Activated B cell treated with CpG ODN at 0.5 μM for 24 hours (primary cell): ENCODE measurements at regions of chr2 and their contacts with region 1.

Region 1: DNA sequence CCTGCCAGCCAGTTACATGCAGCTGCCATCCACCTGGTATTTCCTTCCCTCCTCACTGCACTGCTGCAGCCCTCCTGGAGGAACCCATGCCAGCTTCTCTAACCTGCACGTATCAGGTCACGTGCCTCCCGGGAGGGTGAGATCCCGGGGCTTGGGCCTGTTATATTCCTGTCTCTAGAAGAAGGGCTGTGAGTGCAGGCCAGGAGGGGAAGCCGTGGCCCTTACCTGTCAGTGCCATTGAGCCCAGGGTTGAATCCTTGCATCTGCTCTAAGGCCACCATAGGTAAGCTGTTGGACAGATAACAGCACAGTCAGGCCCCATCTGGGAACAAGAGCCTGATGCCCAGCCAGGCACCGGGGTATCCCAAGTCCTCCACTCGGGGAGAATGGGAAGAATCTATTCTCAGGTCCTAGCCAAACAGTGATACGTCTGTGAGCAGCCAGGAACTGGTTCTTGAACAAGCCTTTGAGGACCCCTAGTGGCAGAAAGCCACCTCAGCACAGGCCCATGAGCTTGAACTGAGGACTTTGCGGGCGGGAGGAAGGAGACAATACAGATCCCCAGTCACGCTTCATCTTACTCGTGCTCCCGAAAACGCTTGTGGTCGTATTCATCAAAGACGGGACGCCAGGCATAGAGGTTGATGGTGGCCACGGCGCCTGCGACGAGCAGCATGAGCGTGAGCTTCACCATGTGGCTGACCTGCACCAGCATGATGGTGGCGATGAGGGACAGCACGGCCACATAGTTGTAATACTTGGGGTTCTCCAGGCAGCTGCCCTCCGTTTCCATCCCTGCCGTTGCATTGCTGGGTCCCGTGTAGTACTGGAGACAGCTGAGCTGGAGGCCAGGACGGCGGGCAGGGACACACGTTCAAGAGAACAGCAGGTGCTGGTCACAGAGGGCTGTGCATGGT is 34.4 kb downstream of the CENPO start:
- DNase-seq: peak; percentile 41
- ATAC-seq: peak; percentile 86
- H3K4me3 Mint-ChIP-seq: no peak overlapping the region
- H3K27ac Mint-ChIP-seq: no peak overlapping the region
- H3K4me1 Mint-ChIP-seq: peaks cover 3% of the 10 kb centered on the region
- H3K27me3 Mint-ChIP-seq: no peaks in the 10 kb centered on the region
- CTCF ChIP-seq: peak; percentile 38

Region 2: GRCh38 chr2:24421668-24422067 is 405.9 kb before region 1 on chr2:
- CTCF ChIA-PET with region 1: interaction called, 62 read pairs
- POLR2A ChIA-PET with region 1: interaction called, 5 read pairs
- intact Hi-C with region 1: loop called (anchors 1 kb)
- DNase-seq: peak; percentile 26
- ATAC-seq: peak; percentile 65
- H3K4me3 Mint-ChIP-seq: no peak overlapping the region
- H3K27ac Mint-ChIP-seq: no peak overlapping the region
- H3K4me1 Mint-ChIP-seq: no peaks in the 10 kb centered on the region
- H3K27me3 Mint-ChIP-seq: peaks cover 2% of the 10 kb centered on the region
- CTCF ChIP-seq: no peak

Region 3: DNA sequence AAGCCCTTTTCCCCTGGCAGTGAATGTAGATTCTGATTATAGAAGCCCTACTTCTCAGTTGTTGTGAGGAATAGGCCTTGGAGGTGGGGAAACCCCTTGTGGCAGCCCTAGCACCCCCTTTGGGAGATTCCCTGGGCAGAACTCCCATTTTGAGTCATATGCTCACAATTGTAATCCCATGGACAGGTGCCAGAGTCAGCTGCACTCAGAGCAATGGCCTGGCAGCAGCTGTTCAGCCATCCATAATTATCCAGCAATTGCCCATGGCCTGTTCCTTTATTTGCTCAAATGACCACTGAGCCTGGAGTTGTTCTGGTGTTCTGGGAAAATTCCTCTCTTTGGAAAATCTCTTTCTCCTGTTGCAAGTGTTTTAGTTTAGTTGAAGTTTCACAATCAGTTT is 106.1 kb before region 1 on chr2:
- CTCF ChIA-PET with region 1: no interaction called
- POLR2A ChIA-PET with region 1: no interaction called
- intact Hi-C with region 1: loop called (anchors 5 kb)
- DNase-seq: no peak
- ATAC-seq: no peak
- H3K4me3 Mint-ChIP-seq: no peak overlapping the region
- H3K27ac Mint-ChIP-seq: no peak overlapping the region
- H3K4me1 Mint-ChIP-seq: peaks cover 29% of the 10 kb centered on the region
- H3K27me3 Mint-ChIP-seq: no peaks in the 10 kb centered on the region
- CTCF ChIP-seq: no peak

Region 4: DNA sequence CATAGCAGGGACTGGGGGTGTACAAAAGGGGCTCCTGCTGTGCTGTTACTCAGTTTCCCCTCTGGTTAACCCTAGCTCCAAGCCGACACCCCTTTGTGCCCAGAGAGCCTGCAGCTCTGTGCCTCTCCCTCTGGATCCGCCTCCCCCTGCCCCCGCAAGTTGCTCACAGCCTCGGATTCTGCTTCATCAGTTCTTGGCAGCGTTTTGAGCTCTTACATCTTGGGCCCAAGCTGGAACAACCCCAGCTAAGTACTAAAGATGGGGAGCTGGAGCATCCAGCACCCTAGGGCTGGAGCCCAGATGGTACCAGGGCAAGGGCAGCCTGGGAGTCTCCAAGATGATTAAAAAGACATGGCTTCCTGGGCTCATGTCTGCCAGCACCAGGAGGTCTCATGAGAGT is 300.1 kb after region 1 on chr2:
- CTCF ChIA-PET with region 1: interaction called, 10 read pairs
- POLR2A ChIA-PET with region 1: no interaction called
- intact Hi-C with region 1: loop called (anchors 1 kb)
- DNase-seq: no peak
- ATAC-seq: no peak
- H3K4me3 Mint-ChIP-seq: no peak overlapping the region
- H3K27ac Mint-ChIP-seq: no peak overlapping the region
- H3K4me1 Mint-ChIP-seq: peaks cover 15% of the 10 kb centered on the region
- H3K27me3 Mint-ChIP-seq: peaks cover 19% of the 10 kb centered on the region
- CTCF ChIP-seq: no peak